Activated T-helper 2 cell treated with anti-CD3 and anti-CD28 coated beads, Interferon-gamma antibody, Interleukin-2, Interleukin-4, amounts not matched to agents 10 μg/mL and 5 μg/mL and 100 μg/mL, durations not matched to agents 14 hours and 24 hours and 36 hours (primary cell): ENCODE measurements at regions of chr7 and their contacts with region 1.

Region 1: GRCh38 chr7:133070562-133070961 is 11.3 kb downstream of the CHCHD3 start:
- DNase-seq: no peak
- H3K4me3 Mint-ChIP-seq: no peak overlapping the region
- H3K27ac Mint-ChIP-seq: no peak overlapping the region
- H3K4me1 Mint-ChIP-seq: peaks cover 3% of the 10 kb centered on the region
- H3K27me3 Mint-ChIP-seq: no peaks in the 10 kb centered on the region

Region 2: DNA sequence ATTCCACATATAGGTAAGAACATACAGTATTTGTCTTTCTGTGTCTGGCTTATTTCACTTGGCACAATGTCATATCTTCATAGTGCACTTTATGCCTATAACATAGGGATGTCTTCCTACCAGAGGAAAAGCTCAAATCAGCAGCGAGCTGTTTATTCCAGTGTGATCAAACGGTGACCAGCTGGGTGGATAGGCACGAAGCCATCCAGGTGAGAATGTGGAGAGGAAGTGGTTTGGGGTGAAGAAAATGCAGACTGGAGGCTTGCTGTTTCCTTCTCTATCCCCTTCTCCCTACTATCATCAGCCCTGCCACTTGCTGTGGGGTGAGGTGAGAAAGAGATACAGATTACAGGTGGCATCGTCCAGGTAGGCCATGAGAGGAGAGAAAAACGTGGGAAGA is 41.1 kb before region 1 on chr7:
- intact Hi-C with region 1: no loop called
- DNase-seq: no peak
- H3K4me3 Mint-ChIP-seq: no peak overlapping the region
- H3K27ac Mint-ChIP-seq: no peak overlapping the region
- H3K4me1 Mint-ChIP-seq: peaks cover 4% of the 10 kb centered on the region
- H3K27me3 Mint-ChIP-seq: no peaks in the 10 kb centered on the region

Region 3: DNA sequence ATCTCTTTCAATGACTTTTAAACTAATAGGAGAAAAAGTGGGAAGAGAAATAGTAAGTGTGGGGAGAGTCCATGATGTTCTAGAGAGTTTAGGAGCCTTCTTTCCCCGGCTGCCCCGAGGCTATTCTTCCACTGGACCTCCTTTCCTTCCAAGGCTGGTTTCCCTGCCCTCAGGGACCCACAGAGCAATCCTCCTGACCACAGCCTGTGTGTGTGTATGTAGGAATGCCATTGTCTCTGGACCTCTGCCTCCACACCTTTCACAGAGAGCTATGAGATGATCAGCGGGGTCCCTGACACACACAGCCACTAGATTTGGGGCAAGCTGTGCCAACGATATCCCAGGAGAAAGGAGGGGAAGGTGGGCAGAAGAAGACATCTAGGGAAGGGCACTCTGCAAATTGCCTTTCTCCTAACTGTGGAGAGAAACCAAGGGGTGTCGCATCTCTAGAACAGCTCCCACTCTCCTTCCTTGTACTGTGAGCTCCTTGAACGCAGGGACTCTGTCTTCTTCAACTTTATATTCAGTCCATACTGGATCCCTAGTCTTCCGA is 24.6 kb after region 1 on chr7:
- intact Hi-C with region 1: loop called (anchors 1 kb)
- DNase-seq: no peak
- H3K4me3 Mint-ChIP-seq: no peak overlapping the region
- H3K27ac Mint-ChIP-seq: no peak overlapping the region
- H3K4me1 Mint-ChIP-seq: no peaks in the 10 kb centered on the region
- H3K27me3 Mint-ChIP-seq: peaks cover 3% of the 10 kb centered on the region

Region 4: DNA sequence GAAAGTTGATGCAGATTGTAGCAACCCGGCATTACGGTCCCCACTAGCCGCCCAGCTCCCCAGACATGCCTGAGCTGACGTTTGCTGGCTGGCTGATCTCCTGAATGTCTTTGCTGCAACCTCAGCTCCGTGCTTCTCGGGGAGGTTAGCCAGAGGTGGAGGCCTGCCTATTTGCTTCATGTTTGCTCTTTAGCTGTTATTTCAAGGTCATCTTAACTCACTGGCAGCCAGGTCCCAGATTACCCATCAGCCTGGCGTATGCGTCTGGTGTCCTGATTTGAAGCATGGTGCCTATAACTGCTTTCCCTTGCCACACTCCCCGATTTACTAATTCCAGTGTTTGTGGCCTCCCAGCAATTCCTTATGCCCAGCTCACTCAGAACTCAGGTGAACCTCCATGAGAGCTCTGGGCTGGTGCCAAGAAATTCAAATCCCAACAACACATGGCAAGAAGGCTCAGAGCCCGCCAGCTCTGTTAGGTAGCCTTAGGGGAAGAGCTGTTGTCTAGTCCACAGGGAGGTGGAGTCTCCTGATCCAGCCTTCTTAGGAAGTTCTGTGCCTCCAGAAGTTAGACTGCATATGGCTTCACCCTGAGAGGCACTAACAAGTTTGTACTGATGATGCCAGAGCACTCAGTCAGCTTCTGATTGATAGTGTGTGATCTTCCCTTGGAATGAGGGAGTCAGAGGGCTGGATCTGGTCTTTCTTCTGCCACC is 112.7 kb after region 1 on chr7:
- intact Hi-C with region 1: no loop called
- DNase-seq: no peak
- H3K4me3 Mint-ChIP-seq: no peak overlapping the region
- H3K27ac Mint-ChIP-seq: no peak overlapping the region
- H3K4me1 Mint-ChIP-seq: no peaks in the 10 kb centered on the region
- H3K27me3 Mint-ChIP-seq: peaks cover 2% of the 10 kb centered on the region